Mammary epithelial cell (primary cell): ENCODE measurements at regions of chr2 and their contacts with region 1.

Region 1: GRCh38 chr2:180707884-180708205 is 272.6 kb upstream of the UBE2E3 start:
- DNase-seq: peak; percentile 96
- H3K4me3 ChIP-seq: no peak overlapping the region
- H3K27ac ChIP-seq: no peak overlapping the region
- H3K4me1 ChIP-seq: peaks cover 27% of the 10 kb centered on the region
- H3K27me3 ChIP-seq: no peaks in the 10 kb centered on the region
- CTCF ChIP-seq: no peak

Region 2: DNA sequence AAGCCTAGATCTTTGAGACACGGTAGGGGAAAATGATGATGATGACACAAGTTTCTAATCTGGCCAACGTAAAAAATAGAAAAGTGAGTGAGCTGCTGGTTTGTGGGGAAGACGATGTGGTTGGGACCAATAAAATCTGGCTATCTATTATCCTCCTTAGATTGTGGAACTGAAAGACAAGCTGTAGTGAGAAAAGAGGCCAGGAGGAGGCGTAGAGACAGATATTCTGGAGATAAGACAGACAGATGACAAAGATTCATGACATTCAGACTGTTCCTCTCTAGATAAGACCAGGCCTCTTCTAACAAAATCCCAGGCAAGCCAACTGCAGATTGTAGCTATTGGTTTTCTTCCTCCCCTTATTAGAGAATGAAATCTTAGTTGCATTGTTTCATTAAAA is 103.8 kb before region 1 on chr2:
- CTCF ChIA-PET with region 1: no interaction called
- dilution Hi-C with region 1: no loop called
- in situ Hi-C with region 1: no loop called
- intact Hi-C with region 1: loop called (anchors 5 kb)
- DNase-seq: peak; percentile 8
- H3K4me3 ChIP-seq: no peak overlapping the region
- H3K27ac ChIP-seq: no peak overlapping the region
- H3K4me1 ChIP-seq: no peaks in the 10 kb centered on the region
- H3K27me3 ChIP-seq: no peaks in the 10 kb centered on the region
- CTCF ChIP-seq: peak; percentile 56 to 57